MCF 10A (cell line): ENCODE measurements at regions of chr7 and their contacts with region 1.

Region 1: DNA sequence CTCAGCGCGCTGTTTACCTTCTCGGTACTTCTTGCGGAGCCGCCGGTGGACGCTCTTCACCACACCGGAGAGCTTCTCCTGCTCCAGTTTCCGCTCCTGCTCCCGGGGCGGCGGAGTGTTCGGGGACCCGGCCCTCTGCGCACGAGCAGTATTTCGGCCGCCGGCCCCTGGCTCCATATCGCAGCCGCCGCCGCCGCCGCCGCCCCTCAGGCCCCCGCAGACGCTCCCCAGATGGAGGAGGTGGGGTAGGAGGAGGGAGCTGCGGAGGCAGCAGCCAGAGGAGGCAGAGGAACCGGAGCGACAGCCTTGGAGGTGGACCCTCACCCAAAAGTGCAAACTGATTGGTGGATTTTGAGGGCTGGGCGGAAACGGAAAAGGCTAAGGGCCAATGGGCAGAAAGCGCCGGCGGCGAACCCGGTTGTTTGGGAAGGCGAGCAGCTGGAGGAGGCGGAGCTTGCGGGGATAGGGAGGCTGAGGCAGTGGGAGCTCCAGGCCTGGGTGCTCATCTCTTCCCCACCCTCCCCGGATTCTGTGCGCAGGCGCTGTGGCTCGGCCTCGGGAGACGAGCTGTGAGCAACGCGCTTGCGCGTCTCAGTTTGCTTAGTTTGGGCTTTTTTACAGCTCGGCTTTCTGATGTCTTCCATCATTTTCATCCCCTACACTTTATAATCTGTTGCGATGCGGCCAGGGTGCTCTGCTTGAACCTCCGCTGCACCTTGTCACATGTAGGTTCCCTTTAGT is 146.9 kb downstream of the GPR85 start:
- DNase-seq: peak; percentile 99
- H3K4me3 Mint-ChIP-seq: peak overlapping the region; percentile 77
- H3K27ac Mint-ChIP-seq: peak overlapping the region; percentile 71
- H3K4me1 Mint-ChIP-seq: peaks cover 15% of the 10 kb centered on the region
- H3K27me3 Mint-ChIP-seq: no peaks in the 10 kb centered on the region
- CTCF ChIP-seq: no peak

Region 2: DNA sequence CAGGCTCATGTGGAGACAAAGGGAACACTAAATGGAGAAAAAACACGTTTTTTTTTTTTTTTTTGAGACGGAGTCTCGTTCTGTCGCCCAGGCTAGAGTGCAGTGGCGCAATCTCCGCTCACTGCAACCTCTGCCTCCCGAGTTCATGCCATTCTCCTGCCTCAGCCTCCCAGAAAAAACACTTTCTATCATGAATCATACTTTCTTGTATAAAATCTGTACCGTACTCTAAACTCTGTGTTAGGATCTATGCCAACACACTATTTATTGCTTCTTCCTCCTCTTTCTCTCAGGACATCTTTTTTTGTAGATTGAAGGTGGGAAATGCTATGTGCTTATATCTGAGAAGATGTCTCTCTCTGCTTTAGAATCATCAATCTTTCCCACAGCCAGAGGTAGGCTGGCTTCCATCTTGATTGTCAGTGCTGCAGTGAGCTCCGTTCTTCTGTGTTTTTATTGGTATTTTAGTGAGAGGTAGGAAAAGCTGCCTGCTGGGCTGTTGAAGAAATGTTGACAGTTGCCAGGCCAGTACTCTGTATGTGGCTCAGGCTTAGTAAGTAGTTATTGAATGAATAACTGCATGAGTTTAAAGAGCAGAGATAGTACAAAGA is 45.7 kb after region 1 on chr7:
- CTCF ChIA-PET with region 1: no interaction called
- POLR2A ChIA-PET with region 1: interaction called, 18 read pairs
- intact Hi-C with region 1: loop called (anchors 5 kb)
- DNase-seq: peak; percentile 70
- H3K4me3 Mint-ChIP-seq: no peak overlapping the region
- H3K27ac Mint-ChIP-seq: no peak overlapping the region
- H3K4me1 Mint-ChIP-seq: peaks cover 42% of the 10 kb centered on the region
- H3K27me3 Mint-ChIP-seq: no peaks in the 10 kb centered on the region
- CTCF ChIP-seq: no peak

Region 3: GRCh38 chr7:113197274-113197673 is 257.5 kb after region 1 on chr7:
- CTCF ChIA-PET with region 1: no interaction called
- POLR2A ChIA-PET with region 1: no interaction called
- intact Hi-C with region 1: no loop called
- DNase-seq: peak; percentile 47
- H3K4me3 Mint-ChIP-seq: no peak overlapping the region
- H3K27ac Mint-ChIP-seq: no peak overlapping the region
- H3K4me1 Mint-ChIP-seq: peaks cover 11% of the 10 kb centered on the region
- H3K27me3 Mint-ChIP-seq: no peaks in the 10 kb centered on the region
- CTCF ChIP-seq: no peak

Region 4: GRCh38 chr7:113289140-113289740 is 349.5 kb after region 1 on chr7:
- CTCF ChIA-PET with region 1: no interaction called
- POLR2A ChIA-PET with region 1: no interaction called
- intact Hi-C with region 1: loop called (anchors 5 kb)
- DNase-seq: peak; percentile 64
- H3K4me3 Mint-ChIP-seq: no peak overlapping the region
- H3K27ac Mint-ChIP-seq: no peak overlapping the region
- H3K4me1 Mint-ChIP-seq: peaks cover 5% of the 10 kb centered on the region
- H3K27me3 Mint-ChIP-seq: no peaks in the 10 kb centered on the region
- CTCF ChIP-seq: peak; percentile 68

Region 5: DNA sequence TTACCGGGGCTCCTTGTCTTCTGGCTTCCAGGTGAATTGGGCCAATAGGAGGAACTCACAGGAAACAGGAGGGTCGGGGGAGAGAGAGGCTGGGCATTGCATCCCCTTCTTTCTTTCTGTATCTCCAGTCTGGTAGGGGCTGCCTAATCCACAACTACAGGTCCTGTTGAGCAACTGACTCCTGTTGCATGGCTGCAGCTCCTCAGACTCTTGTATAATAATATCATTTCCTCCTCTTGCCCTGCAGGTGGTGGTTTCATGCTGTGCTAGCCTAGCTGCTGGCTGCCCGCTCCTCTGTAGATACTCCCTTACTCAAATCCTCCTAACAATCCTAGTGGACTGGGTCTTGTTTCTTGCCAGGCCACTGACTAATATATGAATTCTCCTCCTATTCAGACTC is 455.1 kb after region 1 on chr7:
- CTCF ChIA-PET with region 1: no interaction called
- POLR2A ChIA-PET with region 1: no interaction called
- intact Hi-C with region 1: no loop called
- DNase-seq: peak; percentile 4
- H3K4me3 Mint-ChIP-seq: no peak overlapping the region
- H3K27ac Mint-ChIP-seq: no peak overlapping the region
- H3K4me1 Mint-ChIP-seq: no peaks in the 10 kb centered on the region
- H3K27me3 Mint-ChIP-seq: no peaks in the 10 kb centered on the region
- CTCF ChIP-seq: no peak